ENCODE measurements at regions of chrX and their contacts with region 1.

Region 1: DNA sequence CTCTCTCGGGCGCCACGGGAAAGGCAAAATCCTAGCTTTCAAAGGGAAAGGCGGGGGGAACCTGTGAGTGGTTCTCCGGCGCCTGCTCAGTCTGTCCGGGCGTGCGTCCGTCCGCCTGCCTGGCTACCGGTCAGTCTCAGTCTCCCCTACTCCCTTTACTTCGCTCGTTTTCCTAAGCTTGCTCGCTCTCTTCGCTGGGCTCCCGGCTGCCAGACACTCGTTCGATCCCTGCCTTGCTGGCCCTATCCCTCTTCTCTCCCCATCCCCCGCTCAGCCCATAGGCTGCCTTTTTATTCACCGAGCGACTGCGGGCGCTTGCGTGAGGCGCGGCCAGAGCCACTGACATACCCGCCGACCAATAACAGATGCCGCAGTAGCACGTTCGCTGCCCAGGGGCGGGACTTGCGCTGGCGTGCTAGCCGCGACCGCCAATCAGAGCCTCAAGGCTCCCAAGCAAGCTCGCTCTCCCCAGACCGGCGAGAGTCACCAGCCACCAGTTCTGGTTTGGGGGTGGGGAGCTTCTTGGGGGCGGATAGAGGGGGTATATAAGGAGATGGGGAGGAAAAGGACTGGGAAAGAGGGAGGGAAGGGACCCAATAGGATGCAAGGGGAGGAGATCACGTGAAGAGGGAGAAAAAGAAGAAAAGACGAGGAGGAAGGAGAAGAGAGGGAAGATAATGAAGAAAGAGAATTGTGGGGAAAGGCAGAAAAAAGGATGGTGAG is 30.0 kb downstream of the ARHGEF9 start:
- DNase-seq: peak; percentile 92
- ATAC-seq: peak; percentile 97
- H3K4me3 Mint-ChIP-seq: peak overlapping the region; percentile 95
- H3K27ac Mint-ChIP-seq: peak overlapping the region; percentile 97
- H3K4me1 Mint-ChIP-seq: peaks cover 33% of the 10 kb centered on the region
- H3K27me3 Mint-ChIP-seq: no peaks in the 10 kb centered on the region

Region 2: DNA sequence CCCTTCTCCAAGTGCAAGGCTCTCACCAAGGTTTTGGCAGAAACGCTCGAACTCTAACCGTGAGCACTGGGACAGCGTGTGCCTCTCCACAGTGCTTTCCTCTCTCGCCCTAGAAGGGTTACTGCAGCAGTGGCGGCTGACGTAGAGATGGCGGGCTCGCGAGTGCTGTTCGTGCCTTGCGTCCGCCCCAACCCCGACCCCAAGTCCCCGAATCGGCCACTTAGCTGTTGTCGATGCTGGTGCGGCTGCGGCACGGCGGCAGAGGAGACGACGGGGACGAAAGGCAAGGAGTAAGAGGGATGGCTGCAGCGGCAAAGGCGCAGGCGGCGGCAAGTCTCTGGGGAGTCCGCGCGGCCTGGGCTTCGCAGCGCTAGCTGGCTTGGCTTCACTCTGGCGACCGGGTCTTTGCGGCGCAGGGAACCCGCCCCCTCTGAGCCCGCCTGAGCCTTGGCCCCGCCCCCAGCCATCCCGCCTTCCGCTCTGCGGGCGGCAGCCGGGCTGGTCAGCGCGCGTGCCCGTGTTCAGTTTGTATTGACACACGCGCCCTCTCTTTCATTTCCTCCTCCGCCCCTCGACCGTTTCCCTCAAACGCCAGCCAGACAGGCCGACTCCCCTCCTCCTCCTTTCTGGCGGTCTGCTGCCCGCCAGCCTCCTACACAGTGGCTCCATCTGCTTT is 403.9 kb before region 1 on chrX and contains the start of gene SPIN4:
- CTCF ChIA-PET with region 1: no interaction called
- POLR2A ChIA-PET with region 1: no interaction called
- intact Hi-C with region 1: loop called in 1 of 2 experiments (anchors 2 kb)
- DNase-seq: peak; percentile 80
- ATAC-seq: peak; percentile 92
- H3K4me3 Mint-ChIP-seq: peak within 1 kb of the TSS; percentile 83
- H3K27ac Mint-ChIP-seq: peak within 1 kb of the TSS; percentile 72
- H3K4me1 Mint-ChIP-seq: peaks cover 14% of the 10 kb centered on the region
- H3K27me3 Mint-ChIP-seq: no peaks in the 10 kb centered on the region
- total RNA-seq, gene SPIN4: 3.3 TPM

Region 3: GRCh38 chrX:63560601-63561218 is 194.3 kb before region 1 on chrX:
- CTCF ChIA-PET with region 1: no interaction called
- POLR2A ChIA-PET with region 1: no interaction called
- intact Hi-C with region 1: loop called in 1 of 2 experiments (anchors 2 kb)
- DNase-seq: peak; percentile 70
- ATAC-seq: peak; percentile 94
- H3K4me3 Mint-ChIP-seq: peak overlapping the region; percentile 95
- H3K27ac Mint-ChIP-seq: peak overlapping the region; percentile 92
- H3K4me1 Mint-ChIP-seq: peaks cover 16% of the 10 kb centered on the region
- H3K27me3 Mint-ChIP-seq: no peaks in the 10 kb centered on the region

Region 4: GRCh38 chrX:63718010-63718694 is 36.9 kb before region 1 on chrX:
- CTCF ChIA-PET with region 1: no interaction called
- POLR2A ChIA-PET with region 1: no interaction called
- intact Hi-C with region 1: no loop called
- DNase-seq: no peak
- ATAC-seq: no peak
- H3K4me3 Mint-ChIP-seq: no peak overlapping the region
- H3K27ac Mint-ChIP-seq: no peak overlapping the region
- H3K4me1 Mint-ChIP-seq: no peaks in the 10 kb centered on the region
- H3K27me3 Mint-ChIP-seq: no peaks in the 10 kb centered on the region

Region 5: GRCh38 chrX:65034668-65035445 is 1279.8 kb after region 1 on chrX:
- CTCF ChIA-PET with region 1: no interaction called
- POLR2A ChIA-PET with region 1: no interaction called
- intact Hi-C with region 1: loop called in 1 of 2 experiments (anchors 10 kb)
- DNase-seq: peak; percentile 90
- ATAC-seq: peak; percentile 92
- H3K4me3 Mint-ChIP-seq: peak within 1 kb of the TSS; percentile 87
- H3K27ac Mint-ChIP-seq: peak within 1 kb of the TSS; percentile 85
- H3K4me1 Mint-ChIP-seq: peaks cover 17% of the 10 kb centered on the region
- H3K27me3 Mint-ChIP-seq: no peaks in the 10 kb centered on the region

Region 6: GRCh38 chrX:65534450-65535292 is 1779.7 kb after region 1 on chrX and contains the start of gene LAS1L:
- CTCF ChIA-PET with region 1: no interaction called
- POLR2A ChIA-PET with region 1: no interaction called
- intact Hi-C with region 1: loop called in 1 of 2 experiments (anchors 2 kb)
- DNase-seq: peak; percentile 93
- ATAC-seq: peak; percentile 100
- H3K4me3 Mint-ChIP-seq: peak within 1 kb of the TSS; percentile 99
- H3K27ac Mint-ChIP-seq: peak within 1 kb of the TSS; percentile 96
- H3K4me1 Mint-ChIP-seq: peaks cover 19% of the 10 kb centered on the region
- H3K27me3 Mint-ChIP-seq: no peaks in the 10 kb centered on the region
- total RNA-seq, gene LAS1L: 56.4 to 64.0 TPM